Cardiac septum (tissue), 1 donor: ENCODE measurements at regions of chr17 and their contacts with region 1.

Region 1: GRCh38 chr17:21043286-21044232 is 748 bp upstream of the USP22 start:
- DNase-seq: peak; percentile 98

Region 2: GRCh38 chr17:20611309-20611708 is 432.2 kb before region 1 on chr17:
- intact Hi-C with region 1: no loop called
- DNase-seq: no peak

Region 3: GRCh38 chr17:20908373-20909273 is 134.9 kb before region 1 on chr17:
- intact Hi-C with region 1: loop called (anchors 2 kb)
- DNase-seq: peak; percentile 95

Region 4: DNA sequence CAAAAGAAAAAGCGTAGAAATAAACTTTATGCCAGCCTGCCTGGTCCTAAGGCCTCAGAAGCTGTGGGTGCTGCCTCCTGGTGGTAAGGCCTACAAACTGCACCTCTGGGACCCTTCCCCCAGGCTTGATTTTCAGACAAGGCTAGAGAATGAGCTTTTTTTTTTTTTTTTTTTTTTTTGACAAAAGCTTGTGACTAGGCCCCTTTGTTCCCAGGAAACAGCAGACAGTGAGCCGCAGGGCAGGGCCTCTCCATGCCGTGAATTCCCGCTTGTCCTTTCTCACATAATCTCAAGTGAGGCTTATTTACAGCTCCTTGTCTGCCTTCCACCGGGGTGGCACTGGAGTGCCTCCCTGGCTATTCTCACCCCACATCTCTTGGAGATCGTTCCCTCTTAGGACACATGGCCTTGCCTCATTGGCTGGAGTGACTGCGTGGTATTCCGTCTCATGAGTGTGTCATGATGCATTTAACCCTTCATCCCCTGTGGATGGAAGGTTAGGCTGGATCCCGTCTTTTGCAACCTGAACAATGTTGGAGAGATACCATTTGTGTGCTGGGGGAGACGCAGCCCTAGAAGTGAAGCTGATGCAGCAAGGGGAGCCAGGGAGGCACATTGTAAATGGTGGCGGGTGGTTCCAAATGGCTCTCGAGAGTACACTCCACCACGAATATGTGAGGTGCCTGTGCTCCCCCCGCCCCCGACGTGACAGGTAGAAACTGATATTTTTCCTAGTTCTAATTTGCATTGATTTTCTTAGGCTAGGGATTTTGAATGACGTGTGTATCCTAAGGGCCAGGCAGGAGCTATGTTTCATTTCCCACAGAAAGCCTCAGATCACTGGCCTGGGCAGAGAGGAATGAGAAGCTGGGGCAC is 50.3 kb before region 1 on chr17:
- intact Hi-C with region 1: loop called (anchors 5 kb)
- DNase-seq: peak; percentile 73

Region 5: DNA sequence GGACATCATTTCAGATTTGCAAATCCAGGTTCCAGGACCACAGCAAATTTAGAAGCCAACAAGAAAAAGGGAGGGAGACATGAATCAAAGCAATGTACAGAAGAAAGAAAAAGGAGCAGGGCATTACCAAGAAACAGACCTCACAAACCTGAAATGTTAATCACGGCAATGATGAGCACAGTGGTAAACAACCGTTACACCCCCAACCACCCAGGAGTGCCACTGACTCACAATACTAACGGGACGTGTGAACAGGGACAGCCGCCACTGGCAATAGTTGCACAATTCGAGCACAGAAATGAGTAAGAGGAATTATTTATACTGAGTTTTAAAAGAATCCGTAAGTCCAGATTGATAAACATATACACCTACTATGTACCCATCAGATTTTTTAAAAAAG is 14.5 kb before region 1 on chr17:
- intact Hi-C with region 1: no loop called
- DNase-seq: no peak

Region 6: DNA sequence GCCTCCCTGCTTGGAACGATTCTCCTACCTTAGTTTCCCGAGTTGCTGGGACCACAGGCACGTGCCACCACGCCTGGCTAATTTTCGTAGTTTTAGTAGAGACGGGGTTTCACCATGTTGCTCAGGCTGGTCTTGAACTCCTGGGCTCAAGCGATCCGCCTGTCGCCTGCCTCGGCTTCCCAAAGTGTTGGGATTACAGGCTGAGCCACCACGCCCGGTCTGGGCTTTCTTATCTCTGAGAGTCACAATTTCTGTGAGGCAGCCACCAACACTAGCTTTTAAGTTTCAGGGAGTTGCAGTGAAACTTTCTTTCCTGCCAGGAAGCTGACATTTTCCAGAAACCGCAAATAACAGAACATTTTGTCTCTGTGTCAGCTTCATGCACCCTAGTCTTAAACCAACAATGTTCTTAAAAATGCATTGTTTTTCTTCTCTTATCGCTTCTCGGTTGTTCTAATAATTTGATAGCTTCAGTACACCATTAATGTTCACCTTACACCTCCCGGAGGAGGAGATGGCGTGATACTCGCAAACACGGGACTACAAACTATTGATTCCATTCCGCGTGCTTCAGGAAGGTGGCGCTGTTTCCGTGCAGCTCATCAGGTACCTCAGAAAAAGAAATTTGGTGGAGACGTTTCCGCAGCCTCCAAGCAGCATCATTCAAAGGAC is 75.8 kb after region 1 on chr17:
- intact Hi-C with region 1: loop called (anchors 5 kb)
- DNase-seq: peak; percentile 90

Region 7: DNA sequence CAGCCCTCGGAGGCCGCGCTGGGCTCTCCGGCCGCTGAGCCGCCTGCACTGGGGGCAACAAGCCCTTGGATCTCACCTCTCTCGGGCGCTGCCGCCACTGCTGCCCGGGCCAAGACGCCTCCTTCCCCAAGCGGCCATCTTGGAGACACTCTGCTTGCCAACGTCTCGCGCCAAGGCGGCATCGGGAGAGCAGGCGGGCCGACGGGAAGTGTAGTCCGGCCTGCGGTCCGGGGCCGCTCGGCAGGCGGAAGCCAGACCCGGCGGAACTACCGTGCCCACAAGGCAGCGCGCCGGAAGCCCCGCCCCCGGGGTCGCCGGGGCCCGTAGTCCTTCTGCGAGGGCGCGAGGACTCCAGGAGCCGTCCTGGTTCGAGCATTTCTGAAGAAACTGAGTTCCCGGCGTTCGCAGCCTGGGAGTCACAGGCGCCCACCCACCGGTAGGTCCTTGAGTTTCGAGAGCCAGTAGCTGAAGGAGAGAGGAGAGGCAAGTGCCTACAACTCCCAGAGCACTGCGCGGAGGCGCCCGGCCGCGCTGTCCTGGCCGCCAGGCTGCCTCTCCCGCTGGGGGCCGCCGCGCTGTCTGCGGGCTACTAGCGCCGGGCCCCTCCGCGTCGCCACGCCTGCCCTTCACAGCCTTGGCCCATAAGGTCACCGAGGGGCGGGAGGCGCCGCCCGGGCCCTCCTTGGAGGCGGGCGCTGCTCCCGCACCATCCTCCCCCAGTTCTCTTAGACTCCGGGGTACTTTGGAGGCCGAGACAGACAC is 170.6 kb after region 1 on chr17 and contains the start of gene TMEM11:
- intact Hi-C with region 1: loop called (anchors 5 kb)
- DNase-seq: peak; percentile 98
- total RNA-seq, gene TMEM11: 32.0 TPM

Region 8: GRCh38 chr17:21295036-21295952 is 251.7 kb after region 1 on chr17:
- intact Hi-C with region 1: no loop called
- DNase-seq: no peak

Region 9: DNA sequence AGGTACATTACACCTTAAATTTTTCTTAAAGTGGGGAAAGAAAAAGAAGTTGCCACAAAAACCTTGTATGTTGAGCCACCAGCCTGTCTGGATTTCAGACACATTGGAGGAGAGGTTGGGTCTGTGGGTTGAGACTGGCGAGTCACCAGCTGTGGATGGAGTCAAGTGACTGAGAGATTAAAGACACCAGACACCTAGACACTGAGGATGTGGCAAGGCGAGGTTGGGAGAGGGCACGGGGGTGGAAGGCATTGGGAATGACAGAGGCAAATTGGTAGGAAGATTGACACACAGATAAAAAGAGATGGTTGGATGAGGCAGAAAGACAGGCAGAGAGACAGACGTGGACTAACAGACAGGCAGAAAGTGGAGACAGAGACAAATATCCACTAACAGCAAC is 382.2 kb after region 1 on chr17:
- intact Hi-C with region 1: no loop called
- DNase-seq: no peak